Transverse colon (tissue), 4 donors: ENCODE measurements at regions of chr1 and their contacts with region 1.

Region 1: GRCh38 chr1:233790662-233791375 is 113.7 kb upstream of the SLC35F3 start:
- DNase-seq: peak; percentile 11
- H3K4me3 ChIP-seq: no peak overlapping the region
- H3K27ac ChIP-seq: no peak overlapping the region
- H3K4me1 ChIP-seq: no peaks in the 10 kb centered on the region
- H3K27me3 ChIP-seq: peaks cover 6% of the 10 kb centered on the region
- CTCF ChIP-seq: peak; percentile 79 to 90 (median 84)
- EP300 ChIP-seq: no peak
- POLR2A ChIP-seq: no peak

Region 2: DNA sequence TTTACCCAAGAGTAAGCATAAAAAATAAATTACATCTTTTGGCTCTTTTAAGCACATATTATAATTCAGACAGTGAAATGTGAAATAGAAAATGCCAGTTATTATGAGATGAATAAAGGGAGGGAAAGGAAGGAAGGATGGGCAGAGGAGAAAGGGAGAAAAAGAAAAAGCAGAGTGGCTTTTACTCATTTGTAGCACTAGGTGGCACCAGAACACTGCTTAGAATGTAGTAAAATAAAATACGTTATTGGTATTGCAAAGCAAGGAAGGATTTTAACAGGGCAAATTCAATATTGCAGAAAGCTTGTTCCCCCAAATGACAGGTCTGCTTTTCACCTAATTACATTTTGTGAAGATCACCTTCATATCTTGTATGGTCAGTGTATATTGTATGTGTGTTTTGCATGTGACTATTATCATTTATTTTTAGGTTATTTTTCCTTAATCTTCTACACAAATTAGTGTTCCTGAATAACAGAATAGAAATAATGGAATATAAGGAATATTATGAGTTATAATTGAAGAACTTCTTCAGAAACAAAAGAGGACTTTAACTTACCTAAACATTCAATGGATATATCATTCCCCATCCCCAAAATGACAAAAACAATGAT is 486.2 kb before region 1 on chr1:
- in situ Hi-C with region 1: loop called in 1 of 4 experiments (anchors 25 kb)
- intact Hi-C with region 1: no loop called
- DNase-seq: no peak
- H3K4me3 ChIP-seq: no peak overlapping the region
- H3K27ac ChIP-seq: no peak overlapping the region
- H3K4me1 ChIP-seq: no peaks in the 10 kb centered on the region
- H3K27me3 ChIP-seq: peaks cover 7% of the 10 kb centered on the region
- CTCF ChIP-seq: peak; percentile 68 to 77 (median 73)
- EP300 ChIP-seq: no peak
- POLR2A ChIP-seq: no peak

Region 3: GRCh38 chr1:233440951-233441401 is 349.8 kb before region 1 on chr1:
- in situ Hi-C with region 1: loop called (anchors 10 to 25 kb)
- intact Hi-C with region 1: loop called (anchors 5 kb)
- DNase-seq: no peak
- H3K4me3 ChIP-seq: no peak overlapping the region
- H3K27ac ChIP-seq: no peak overlapping the region
- H3K4me1 ChIP-seq: no peaks in the 10 kb centered on the region
- H3K27me3 ChIP-seq: peaks cover 12% of the 10 kb centered on the region
- CTCF ChIP-seq: peak; percentile 39 to 59 (median 53)
- EP300 ChIP-seq: no peak
- POLR2A ChIP-seq: no peak

Region 4: GRCh38 chr1:233868461-233868860 is 77.6 kb after region 1 on chr1:
- in situ Hi-C with region 1: no loop called
- intact Hi-C with region 1: no loop called
- DNase-seq: no peak
- H3K4me3 ChIP-seq: no peak overlapping the region
- H3K27ac ChIP-seq: no peak overlapping the region
- H3K4me1 ChIP-seq: no peaks in the 10 kb centered on the region
- H3K27me3 ChIP-seq: no peaks in the 10 kb centered on the region
- CTCF ChIP-seq: no peak
- EP300 ChIP-seq: no peak
- POLR2A ChIP-seq: no peak